Transverse colon (tissue), 4 donors: ENCODE measurements at regions of chr6 and their contacts with region 1.

Region 1: DNA sequence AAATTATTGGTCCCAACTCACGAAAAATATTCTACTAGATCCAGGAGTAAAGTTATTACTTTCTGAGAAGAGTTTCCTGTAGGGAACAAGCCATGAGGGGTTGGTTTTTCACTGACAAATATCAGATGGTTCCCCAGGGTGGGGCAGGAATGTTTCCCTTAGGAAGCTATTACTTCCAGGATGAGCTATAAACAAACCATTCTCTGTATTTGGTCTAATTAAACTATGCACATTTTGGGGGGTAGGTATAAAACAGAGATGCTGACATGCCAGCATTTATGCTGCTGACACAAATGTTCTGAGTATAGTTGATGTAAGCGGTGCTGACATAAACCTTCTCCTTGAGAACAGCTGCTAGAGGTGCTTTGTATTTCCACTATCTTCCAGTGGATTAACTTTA is 54.2 kb downstream of the OGFRL1 start:
- DNase-seq: no peak
- H3K4me3 ChIP-seq: no peak overlapping the region
- H3K27ac ChIP-seq: no peak overlapping the region
- H3K4me1 ChIP-seq: no peaks in the 10 kb centered on the region
- H3K27me3 ChIP-seq: no peaks in the 10 kb centered on the region
- CTCF ChIP-seq: no peak
- EP300 ChIP-seq: no peak
- POLR2A ChIP-seq: no peak

Region 2: DNA sequence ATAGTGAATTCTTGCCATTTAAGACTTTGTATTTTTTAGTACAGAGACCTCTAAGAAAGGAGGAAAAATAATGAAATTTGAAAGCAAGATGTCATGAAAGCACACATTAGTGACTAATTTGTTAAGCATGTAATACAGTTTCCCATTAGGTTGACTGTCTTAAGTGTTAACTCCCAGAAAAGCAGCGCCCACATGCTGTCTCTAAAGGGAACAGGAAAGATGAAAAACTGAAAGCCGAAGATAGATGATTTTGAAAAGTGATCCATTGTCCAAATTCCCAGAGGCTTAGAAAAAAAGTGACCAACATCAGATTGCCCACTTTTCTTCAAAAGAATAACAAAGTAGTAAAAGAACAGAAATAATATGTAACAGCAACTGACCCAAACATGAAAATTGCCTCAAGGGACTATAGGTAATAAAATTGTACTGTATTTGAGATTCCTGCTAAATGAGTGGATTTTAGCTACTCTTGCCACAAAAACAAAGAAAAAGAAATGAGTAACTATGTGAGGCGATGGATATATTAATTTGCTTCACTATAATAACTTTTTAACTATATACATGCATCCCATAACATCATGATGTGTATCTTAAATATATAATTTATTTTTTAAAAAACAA is 137.3 kb before region 1 on chr6:
- in situ Hi-C with region 1: loop called in 2 of 4 experiments (anchors 5 to 10 kb)
- intact Hi-C with region 1: no loop called
- DNase-seq: no peak
- H3K4me3 ChIP-seq: no peak overlapping the region
- H3K27ac ChIP-seq: no peak overlapping the region
- H3K4me1 ChIP-seq: no peaks in the 10 kb centered on the region
- H3K27me3 ChIP-seq: no peaks in the 10 kb centered on the region
- CTCF ChIP-seq: no peak
- EP300 ChIP-seq: no peak
- POLR2A ChIP-seq: no peak

Region 3: GRCh38 chr6:71254323-71254722 is 88.4 kb before region 1 on chr6:
- in situ Hi-C with region 1: no loop called
- intact Hi-C with region 1: no loop called
- DNase-seq: no peak
- H3K4me3 ChIP-seq: no peak overlapping the region
- H3K27ac ChIP-seq: no peak overlapping the region
- H3K4me1 ChIP-seq: peaks cover 0 to 7% (median 0%) of the 10 kb centered on the region in 4 donors
- H3K27me3 ChIP-seq: no peaks in the 10 kb centered on the region
- CTCF ChIP-seq: no peak
- EP300 ChIP-seq: no peak
- POLR2A ChIP-seq: no peak

Region 4: DNA sequence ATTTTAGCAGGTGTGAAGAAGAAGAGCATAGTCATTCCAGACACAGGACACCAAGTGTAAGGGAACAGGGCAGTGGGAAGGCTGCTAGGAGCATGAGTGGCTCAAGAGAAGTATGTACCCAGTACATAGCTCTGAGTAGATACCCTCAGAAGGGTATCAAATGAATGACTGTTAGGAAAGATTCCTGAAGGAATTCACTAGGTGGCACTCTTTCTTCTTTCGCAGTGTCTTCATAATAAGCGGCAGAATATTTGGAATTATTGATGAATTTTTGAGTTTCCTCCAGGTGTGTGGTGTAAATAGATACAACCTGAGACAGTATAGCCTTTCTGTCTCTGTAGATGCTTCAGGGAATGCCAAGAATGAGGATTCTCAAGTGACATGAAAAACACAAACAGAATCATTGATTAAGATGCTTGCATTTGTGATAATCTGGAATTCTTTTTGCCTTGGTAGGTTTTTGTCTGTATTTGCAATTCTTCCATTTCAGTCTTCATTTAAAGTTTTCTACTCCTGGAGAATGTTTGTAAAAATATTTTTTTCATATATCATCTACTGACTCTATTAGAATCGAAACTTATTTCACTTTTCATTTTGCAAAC is 279.2 kb after region 1 on chr6:
- in situ Hi-C with region 1: no loop called
- intact Hi-C with region 1: no loop called
- DNase-seq: no peak
- H3K4me3 ChIP-seq: no peak overlapping the region
- H3K27ac ChIP-seq: no peak overlapping the region
- H3K4me1 ChIP-seq: no peaks in the 10 kb centered on the region
- H3K27me3 ChIP-seq: no peaks in the 10 kb centered on the region
- CTCF ChIP-seq: peak in 3 of 5 experiments; percentile 28 to 33 (median 28)
- EP300 ChIP-seq: no peak
- POLR2A ChIP-seq: no peak